Activated T-helper 1 cell treated with anti-CD3 and anti-CD28 coated beads, Interleukin-12 subunit alpha, Interleukin-12 subunit beta, Interleukin-2, Interleukin-4 antibody, amounts not matched to agents 30 ng/mL and 10 ng/mL and 1 ng/mL, durations not matched to agents 14 hours and 24 hours and 36 hours (primary cell): ENCODE measurements at regions of chr1 and their contacts with region 1.

Region 1: GRCh38 chr1:58941471-58942289 is 157.8 kb upstream of the JUN start:
- DNase-seq: peak; percentile 46
- H3K4me3 Mint-ChIP-seq: peak overlapping the region; percentile 60
- H3K27ac Mint-ChIP-seq: peak overlapping the region; percentile 85
- H3K4me1 Mint-ChIP-seq: peaks cover 77% of the 10 kb centered on the region
- H3K27me3 Mint-ChIP-seq: no peaks in the 10 kb centered on the region

Region 2: DNA sequence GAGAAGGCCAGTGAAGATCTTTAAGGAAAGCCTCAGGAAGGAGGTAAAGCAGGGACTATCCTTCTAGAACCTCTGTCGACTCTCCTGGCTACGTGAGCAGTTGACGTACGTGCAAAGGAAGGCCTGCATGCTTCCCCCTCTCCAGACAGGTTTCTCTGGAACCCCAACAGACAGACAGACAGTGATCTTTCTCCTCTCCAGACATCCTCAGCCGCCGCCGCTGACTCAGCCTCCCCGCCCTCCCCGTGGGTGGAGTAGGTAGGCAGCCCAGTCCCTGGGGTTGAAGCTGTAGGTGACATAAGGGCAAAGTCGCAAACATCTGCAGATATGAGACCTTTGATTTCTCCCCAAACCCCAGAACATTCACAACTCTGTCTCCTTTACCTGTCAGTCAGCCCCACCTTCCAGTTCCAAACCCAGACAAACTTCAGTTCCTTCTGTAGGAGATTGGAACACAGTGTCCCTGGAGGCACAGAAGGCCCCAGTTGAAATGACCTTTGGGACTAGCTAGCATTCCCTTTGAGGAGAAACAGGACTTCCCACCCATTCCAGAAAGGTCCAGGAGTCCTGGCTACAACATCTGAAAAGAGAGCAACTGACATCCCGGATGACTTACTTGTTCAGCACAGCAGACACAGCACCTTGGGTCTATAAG is 11.9 kb before region 1 on chr1:
- intact Hi-C with region 1: loop called (anchors 1 kb)
- DNase-seq: peak; percentile 60
- H3K4me3 Mint-ChIP-seq: peak overlapping the region; percentile 38
- H3K27ac Mint-ChIP-seq: peak overlapping the region; percentile 49
- H3K4me1 Mint-ChIP-seq: peaks cover 69% of the 10 kb centered on the region
- H3K27me3 Mint-ChIP-seq: no peaks in the 10 kb centered on the region